ENCODE measurements at regions of chr6 and their contacts with region 1.

Region 1: DNA sequence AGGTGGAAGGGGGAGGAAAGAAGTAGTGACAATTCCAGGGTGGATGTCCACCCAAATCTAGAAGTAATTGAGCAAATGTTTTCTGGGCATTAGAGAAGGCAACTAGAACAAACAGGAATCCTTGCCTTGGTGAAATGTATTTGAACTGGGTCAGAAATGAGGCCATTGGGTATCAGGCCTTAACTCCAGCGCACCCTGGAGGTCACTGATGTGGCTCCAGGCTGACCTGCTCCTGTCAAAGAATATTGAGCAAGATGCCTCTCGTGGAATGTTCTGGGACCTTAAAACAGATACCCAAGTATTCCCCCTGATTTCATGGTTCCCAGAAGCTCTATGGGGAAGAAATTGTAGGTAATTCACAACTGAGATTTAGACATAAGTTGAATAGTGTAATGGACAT is 6.9 kb downstream of the HLA-DPB1 start:
- DNase-seq: no peak
- H3K4me3 ChIP-seq: no peak overlapping the region
- H3K27ac ChIP-seq: no peak overlapping the region
- H3K4me1 ChIP-seq: no peaks in the 10 kb centered on the region
- H3K27me3 ChIP-seq: no peaks in the 10 kb centered on the region
- CTCF ChIP-seq: peak; percentile 53

Region 2: DNA sequence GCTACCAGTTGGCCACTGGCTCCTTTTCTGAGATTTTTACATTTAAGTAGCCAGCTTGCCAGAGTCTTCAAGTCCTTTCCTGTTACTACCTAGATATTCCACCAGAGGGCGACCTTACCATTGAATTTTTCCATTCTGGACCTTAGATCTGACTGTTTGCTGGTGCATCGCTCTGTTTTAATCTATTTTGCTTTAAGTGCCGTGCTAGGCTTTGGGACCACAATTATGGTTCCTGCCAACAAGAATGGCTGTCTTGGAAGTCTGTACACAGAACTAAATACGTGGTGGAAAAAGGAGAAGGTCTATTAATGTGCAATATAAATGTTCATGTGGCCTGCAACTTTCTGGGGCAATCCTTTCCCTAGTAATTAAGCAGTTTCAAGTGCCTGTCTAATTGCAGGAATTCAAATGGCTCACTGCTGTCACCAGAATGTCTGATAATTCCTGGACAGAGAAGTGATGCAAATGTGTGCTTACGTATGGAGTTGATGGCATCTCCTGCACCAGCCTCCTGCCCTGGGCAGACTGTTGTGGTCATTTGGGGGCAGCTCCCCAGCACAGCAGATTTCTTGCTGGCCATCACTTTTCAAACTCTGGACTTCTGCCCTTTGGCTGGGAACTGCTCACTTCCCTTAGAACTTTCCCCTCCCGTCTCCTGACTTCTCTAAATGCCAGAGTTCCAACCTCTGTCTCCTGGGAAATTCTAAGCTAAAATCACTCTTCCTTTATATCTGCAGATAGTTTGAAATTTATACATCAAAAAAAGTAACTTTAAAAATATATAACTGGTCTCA is 67.7 kb before region 1 on chr6:
- intact Hi-C with region 1: loop called (anchors 5 kb)
- DNase-seq: peak; percentile 68
- H3K4me3 ChIP-seq: no peak overlapping the region
- H3K27ac ChIP-seq: no peak overlapping the region
- H3K4me1 ChIP-seq: peaks cover 4% of the 10 kb centered on the region
- H3K27me3 ChIP-seq: no peaks in the 10 kb centered on the region
- CTCF ChIP-seq: peak; percentile 73

Region 3: DNA sequence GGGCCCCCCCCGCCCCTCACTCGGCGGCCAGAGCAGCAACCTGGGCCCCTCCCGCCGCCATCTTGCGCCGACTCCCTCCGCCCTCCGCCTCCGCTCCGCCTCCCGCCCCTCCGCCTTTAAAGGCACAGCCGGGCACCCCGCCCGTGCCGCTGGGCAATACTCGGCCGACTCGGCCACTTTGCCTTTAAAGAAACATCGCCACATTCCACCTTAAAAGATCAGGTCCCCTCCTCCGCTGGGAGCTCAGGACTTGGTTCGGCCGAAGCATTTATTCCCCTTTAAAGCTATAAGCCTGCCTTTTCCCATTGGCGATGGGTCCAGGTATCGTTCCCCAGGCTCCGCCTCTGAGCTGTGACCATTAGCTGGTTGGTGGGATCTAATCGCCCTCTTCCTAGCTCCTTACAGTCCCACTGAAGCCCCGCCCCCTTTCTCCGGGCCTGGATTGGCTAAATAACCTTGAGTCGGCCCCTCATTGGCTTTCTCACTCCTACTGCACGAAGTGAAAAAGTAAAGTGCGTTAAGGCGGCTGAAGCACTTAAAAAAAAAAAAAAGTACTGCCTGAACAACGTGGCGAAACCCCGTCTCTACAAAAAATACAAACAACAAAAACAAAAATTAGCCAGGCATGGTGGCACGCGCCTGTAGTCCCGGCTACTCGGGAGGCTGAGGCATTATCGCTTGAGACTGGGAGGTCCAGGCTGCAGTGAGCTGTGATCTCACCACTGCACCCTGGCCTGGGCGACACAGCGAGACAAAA is 235.1 kb after region 1 on chr6 and contains the start of gene ZBTB22:
- intact Hi-C with region 1: no loop called
- DNase-seq: peak; percentile 100
- H3K4me3 ChIP-seq: peak within 1 kb of the TSS; percentile 45
- H3K27ac ChIP-seq: peak within 1 kb of the TSS; percentile 88
- H3K4me1 ChIP-seq: peaks cover 25% of the 10 kb centered on the region
- H3K27me3 ChIP-seq: no peaks in the 10 kb centered on the region
- CTCF ChIP-seq: no peak
- total RNA-seq, gene ZBTB22: 12.4 to 16.9 TPM